Right ventricle myocardium inferior (tissue), 1 donor: ENCODE measurements at regions of chr12 and their contacts with region 1.

Region 1: GRCh38 chr12:13196130-13196921 is at the start of gene EMP1:
- DNase-seq: peak; percentile 90
- ATAC-seq: peak; percentile 87
- total RNA-seq, gene EMP1: 129 TPM

Region 2: DNA sequence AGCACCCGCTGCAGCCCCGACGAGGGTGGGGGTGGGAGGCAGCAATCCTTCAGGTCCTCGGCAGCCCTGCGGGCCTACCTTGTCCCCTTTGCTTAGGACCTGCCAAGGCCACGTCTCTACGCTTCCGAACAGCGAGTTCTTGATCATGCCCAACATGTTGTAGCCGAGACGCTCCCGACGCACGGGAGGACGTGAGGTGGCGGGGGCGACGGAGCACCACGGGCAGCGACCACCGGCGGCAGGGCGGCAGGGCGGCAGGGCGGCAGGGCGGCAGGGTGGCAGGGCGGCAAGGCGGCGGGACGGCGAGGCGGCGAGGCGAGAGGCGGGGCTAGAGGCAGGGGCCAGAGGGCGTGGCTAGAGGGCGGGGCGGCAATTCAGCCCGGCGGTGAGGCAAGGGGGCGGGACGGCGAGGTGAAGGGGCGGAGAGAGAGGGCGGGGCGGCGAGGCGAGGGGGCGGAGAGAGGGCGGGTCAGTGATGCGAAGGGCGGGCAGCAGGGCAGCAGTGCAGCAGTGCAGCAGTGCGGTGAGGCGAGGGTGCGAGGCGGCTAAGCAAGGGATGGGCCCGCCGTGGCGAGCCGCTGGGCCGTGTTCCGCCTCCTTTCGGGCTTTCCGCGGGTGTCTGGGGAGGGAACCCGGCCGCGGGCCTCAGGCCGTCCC is 196.2 kb before region 1 on chr12 and contains the start of gene HEBP1:
- intact Hi-C with region 1: loop called (anchors 5 kb)
- DNase-seq: peak; percentile 99
- ATAC-seq: peak; percentile 97
- total RNA-seq, gene HEBP1: 63.5 TPM

Region 3: DNA sequence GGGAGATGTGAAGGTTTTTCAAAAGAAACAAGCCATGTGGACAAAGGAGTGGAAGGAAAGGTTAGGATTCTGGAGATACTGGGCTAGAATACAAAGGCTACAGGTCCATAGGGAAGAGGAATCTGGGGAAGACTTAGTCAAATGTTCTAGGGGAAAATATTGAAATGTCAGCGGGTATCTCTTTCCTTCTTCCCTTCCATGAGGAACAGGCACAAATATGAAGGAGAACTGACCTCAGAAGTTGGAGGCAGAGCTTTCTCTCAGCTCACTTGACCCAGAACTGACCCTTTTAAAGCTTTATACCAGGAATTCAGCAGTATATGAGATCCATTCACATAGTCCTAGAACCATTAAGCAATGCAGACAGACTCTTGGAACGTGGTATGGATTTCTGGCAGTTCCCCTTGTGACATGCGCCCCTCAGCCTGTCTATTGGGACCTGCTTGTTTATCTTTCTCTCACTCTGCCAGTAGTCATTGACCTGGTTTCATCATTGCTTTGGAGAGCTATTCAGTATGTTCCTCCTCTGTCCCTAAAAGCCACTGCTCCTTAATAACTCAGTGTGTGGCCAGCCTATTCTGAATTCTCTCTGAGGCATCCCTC is 49.9 kb before region 1 on chr12:
- intact Hi-C with region 1: loop called (anchors 2 kb)
- DNase-seq: no peak
- ATAC-seq: peak; percentile 89

Region 4: GRCh38 chr12:13179211-13180074 is 16.9 kb before region 1 on chr12:
- intact Hi-C with region 1: loop called (anchors 2 kb)
- DNase-seq: peak; percentile 80
- ATAC-seq: peak; percentile 88

Region 5: DNA sequence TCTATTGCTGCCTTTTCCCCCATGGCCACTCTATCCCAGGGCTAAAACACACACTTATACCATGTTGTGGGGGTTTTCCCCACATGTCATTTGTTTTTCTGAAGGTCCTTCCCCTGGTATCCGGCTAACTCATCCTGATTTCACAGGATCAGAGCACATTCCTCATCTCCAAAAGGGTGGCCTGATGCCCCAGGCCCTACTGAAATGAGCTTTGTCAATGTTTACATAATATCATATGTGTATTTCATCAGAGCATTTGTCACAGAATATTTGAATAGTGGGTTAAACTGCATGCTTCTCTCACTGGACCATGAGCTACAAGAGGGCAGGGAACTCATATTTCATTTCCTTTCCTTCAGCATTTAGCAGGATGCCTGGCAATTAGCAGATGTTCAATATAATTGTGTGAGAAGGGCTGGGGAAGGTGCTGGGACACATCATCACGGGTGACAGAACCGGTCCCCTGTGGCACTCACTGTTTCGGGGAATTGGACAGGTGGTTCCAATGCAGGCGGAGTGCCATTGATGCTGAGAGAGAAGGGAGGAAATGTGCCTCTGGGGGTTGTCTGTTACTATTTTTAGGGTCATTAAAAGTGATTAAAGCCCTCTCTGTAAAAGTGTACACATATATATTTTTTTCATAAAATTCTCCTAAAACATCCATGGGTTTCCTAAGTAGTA is 27.0 kb after region 1 on chr12:
- intact Hi-C with region 1: no loop called
- DNase-seq: no peak
- ATAC-seq: no peak

Region 6: GRCh38 chr12:13411287-13411686 is 215.0 kb after region 1 on chr12:
- intact Hi-C with region 1: no loop called
- DNase-seq: no peak
- ATAC-seq: no peak